ENCODE measurements at regions of chr16 and their contacts with region 1.

Region 1: DNA sequence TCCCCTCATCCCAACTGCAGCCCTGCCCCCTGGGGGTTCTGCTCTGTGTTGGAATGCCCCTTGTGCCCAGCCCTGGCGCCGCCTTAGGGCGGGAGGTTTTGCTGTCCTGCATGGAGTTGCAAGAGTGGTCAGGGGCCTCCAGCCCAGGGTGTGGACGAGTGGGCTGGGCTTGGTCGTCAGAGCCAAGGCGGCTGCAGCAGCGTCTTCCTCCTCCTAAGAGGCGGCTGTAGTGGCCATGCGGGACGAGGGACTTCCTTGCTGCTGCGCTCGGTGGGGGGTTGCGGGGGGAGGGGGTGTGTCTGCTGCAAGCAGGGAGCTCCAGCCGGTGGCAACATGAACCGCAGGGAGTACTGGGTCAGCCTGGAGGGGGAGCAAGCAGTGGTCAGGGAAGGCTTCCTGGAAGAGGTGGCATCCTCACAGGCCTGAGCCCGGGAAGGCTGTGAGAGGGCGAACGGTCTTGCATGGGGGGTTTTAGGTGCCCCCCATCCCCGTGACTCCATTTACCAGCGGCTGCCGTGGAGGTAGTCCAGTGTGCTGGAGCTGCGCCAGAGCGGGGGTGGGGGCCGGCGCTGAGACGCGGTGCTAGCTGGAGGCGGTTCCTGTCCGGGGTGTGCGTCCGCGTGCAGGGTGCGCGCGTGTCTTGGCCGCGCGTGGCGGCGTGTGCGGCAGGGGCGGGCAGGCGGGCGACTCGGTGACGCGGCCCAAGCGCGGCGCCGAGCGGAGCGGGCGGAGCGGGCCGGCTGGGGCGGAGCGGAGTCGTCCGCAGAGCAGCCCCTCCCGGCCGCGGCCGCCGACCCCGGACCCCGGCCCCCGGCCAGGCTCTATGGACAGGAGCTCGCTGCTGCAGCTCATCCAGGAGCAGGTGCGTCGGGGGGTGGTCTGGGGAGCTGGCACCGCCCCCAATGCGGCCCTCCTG is at the start of gene RHBDL1:
- DNase-seq: no peak
- ATAC-seq: no peak
- H3K4me3 Mint-ChIP-seq: peak within 1 kb of the TSS; percentile 35
- H3K27ac Mint-ChIP-seq: no peak within 1 kb of the TSS
- H3K4me1 Mint-ChIP-seq: peaks cover 15% of the 10 kb centered on the region
- H3K27me3 Mint-ChIP-seq: peaks cover 9% of the 10 kb centered on the region
- CTCF ChIP-seq: no peak
- total RNA-seq, gene RHBDL1: 0.24 TPM in 1 of 2 replicates, not detected in the other

Region 2: DNA sequence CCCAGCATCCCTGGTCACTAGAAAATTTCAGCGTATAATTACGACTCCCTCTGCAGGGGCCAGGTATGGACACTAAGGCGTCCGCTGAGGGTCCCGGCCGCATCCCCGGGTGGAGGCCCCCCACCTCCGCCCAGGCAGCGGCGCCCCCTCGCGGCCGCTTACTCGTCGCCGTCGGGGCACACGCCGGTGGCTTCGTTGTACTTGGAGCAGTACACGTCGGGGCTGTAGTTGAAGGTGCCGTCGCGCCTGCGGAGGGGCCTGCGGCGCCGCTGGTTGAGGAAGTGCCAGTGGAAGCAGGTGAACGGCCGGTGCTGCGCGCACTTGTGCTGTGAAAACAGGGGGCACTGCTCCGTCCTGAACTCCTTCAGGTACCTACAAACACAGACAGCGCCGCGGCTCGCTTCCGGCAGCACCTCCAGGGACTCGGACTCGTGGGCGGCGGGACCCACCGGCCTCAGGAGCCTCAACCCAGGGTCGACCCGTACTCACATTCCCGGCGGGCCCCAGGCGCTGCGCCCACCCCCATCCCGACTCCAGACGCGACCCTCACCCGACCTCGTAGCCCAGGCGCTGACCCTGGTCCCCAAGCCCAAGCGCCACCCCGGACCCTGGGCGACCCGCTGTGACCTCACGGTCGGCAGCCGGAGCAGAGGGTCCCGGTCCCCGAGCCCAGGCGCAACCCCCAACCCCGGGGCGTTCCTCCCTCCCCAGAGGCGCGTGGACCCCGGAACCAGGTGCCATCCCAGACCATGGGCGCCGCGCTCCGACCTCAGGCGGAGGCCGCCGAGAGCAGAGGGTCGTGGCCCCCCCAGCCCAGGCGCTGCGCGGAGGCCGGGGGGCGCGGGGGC is 738.7 kb after region 1 on chr16:
- CTCF ChIA-PET with region 1: no interaction called
- POLR2A ChIA-PET with region 1: interaction called, 10 read pairs
- intact Hi-C with region 1: no loop called
- DNase-seq: peak; percentile 61
- ATAC-seq: peak; percentile 64
- H3K4me3 Mint-ChIP-seq: peak overlapping the region; percentile 88
- H3K27ac Mint-ChIP-seq: peak overlapping the region; percentile 85
- H3K4me1 Mint-ChIP-seq: peaks cover 22% of the 10 kb centered on the region
- H3K27me3 Mint-ChIP-seq: no peaks in the 10 kb centered on the region
- CTCF ChIP-seq: no peak

Measured in activated B cell treated with CpG ODN at 0.5 μM for 24 hours (primary cell).